Heart right ventricle (tissue), 16 donors: ENCODE measurements at regions of chr1 and their contacts with region 1.

Region 1: GRCh38 chr1:173853074-173853473 is 14.7 kb downstream of the GAS5 start:
- DNase-seq: peak in 1 of 2 donors; percentile 8
- ATAC-seq: peak in 7 of 8 donors; percentile 22 to 83 (median 60)
- H3K4me3 ChIP-seq: no peak overlapping the region
- H3K27ac ChIP-seq: peak overlapping the region in 6 of 10 donors; percentile 1 to 59 (median 52)
- H3K4me1 ChIP-seq: peaks cover 0 to 11% (median 0%) of the 10 kb centered on the region in 9 donors
- H3K27me3 ChIP-seq: no peaks in the 10 kb centered on the region
- CTCF ChIP-seq: no peak

Region 2: GRCh38 chr1:173789841-173790240 is 63.2 kb before region 1 on chr1:
- intact Hi-C with region 1: loop called in 1 of 10 experiments (anchors 2 kb)
- DNase-seq: no peak
- ATAC-seq: no peak
- H3K4me3 ChIP-seq: no peak overlapping the region
- H3K27ac ChIP-seq: no peak overlapping the region
- H3K4me1 ChIP-seq: no peaks in the 10 kb centered on the region
- H3K27me3 ChIP-seq: no peaks in the 10 kb centered on the region
- CTCF ChIP-seq: no peak

Region 3: GRCh38 chr1:173802961-173803360 is 50.1 kb before region 1 on chr1:
- intact Hi-C with region 1: no loop called
- DNase-seq: no peak
- ATAC-seq: no peak
- H3K4me3 ChIP-seq: no peak overlapping the region
- H3K27ac ChIP-seq: no peak overlapping the region
- H3K4me1 ChIP-seq: no peaks in the 10 kb centered on the region
- H3K27me3 ChIP-seq: no peaks in the 10 kb centered on the region
- CTCF ChIP-seq: no peak